Vagina (tissue), 2 donors: ENCODE measurements at regions of chr7 and their contacts with region 1.

Region 1: DNA sequence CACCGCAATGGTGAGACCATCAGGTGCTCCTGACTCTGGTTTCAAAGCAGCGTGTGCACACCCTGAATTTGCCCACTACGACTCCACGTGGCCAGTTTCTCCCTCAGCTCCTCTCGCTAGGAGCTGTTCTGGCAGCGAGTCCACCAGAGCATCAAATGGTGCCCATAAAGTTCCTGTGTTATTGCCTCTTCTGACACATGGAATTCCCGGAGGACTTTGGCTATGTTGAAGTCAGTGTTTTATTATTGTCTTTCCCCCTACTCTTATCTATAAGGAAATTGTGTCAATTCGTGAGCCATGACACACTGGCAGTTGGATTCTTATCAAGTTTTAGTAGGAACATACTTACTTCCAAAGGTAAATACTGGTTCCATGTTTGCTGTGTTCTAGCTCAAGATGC is 53.9 kb upstream of the NPVF start:
- DNase-seq: no peak
- H3K4me3 ChIP-seq: no peak overlapping the region
- H3K27ac ChIP-seq: no peak overlapping the region
- H3K4me1 ChIP-seq: no peaks in the 10 kb centered on the region
- H3K27me3 ChIP-seq: no peaks in the 10 kb centered on the region
- CTCF ChIP-seq: no peak
- POLR2A ChIP-seq: no peak

Region 2: DNA sequence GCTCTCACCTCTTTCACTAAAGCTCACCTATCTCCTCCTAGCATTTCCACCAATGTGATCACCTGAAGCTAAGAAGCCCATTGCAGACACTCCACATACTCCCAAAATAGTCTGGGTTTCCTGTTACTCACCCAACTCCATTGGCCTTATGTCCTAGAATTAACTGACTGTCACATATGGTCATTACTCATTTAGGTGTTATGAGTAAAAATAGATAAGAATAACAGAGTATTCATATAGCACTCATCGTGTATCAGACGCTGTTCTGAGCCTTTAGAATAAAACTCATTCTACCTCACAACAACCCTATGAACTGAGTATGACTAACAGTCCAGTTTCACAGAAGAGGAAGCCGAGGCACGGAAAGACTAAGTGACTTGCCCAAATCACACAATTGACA is 120.3 kb after region 1 on chr7:
- intact Hi-C with region 1: no loop called
- DNase-seq: peak in 1 of 2 donors; percentile 25
- H3K4me3 ChIP-seq: no peak overlapping the region
- H3K27ac ChIP-seq: no peak overlapping the region
- H3K4me1 ChIP-seq: peaks cover 5% of the 10 kb centered on the region
- H3K27me3 ChIP-seq: no peaks in the 10 kb centered on the region
- CTCF ChIP-seq: no peak
- POLR2A ChIP-seq: no peak

Region 3: DNA sequence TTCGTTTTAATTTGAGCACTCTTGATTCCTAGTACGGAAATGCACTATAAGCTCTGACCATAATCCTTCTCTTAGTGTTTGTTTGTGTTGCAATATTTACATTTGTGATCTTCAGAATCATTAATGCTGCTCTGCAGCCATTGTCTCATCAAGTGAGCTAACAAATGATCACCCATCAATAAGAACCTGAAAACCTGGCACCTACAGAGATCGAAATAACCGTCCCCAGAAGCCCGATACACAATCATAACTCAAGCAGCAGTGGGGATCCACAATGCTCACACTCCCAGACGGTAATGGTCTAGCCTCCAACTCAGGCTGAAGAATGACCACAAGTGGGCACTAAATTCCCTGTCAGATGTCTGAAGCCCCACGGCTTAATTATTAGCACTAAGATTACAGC is 713.8 kb after region 1 on chr7:
- intact Hi-C with region 1: no loop called
- DNase-seq: no peak
- H3K4me3 ChIP-seq: no peak overlapping the region
- H3K27ac ChIP-seq: no peak overlapping the region
- H3K4me1 ChIP-seq: no peaks in the 10 kb centered on the region
- H3K27me3 ChIP-seq: no peaks in the 10 kb centered on the region
- CTCF ChIP-seq: no peak
- POLR2A ChIP-seq: no peak

Region 4: GRCh38 chr7:26805045-26805444 is 1522.9 kb after region 1 on chr7:
- intact Hi-C with region 1: loop called (anchors 5 kb)
- DNase-seq: no peak
- H3K4me3 ChIP-seq: no peak overlapping the region
- H3K27ac ChIP-seq: no peak overlapping the region
- H3K4me1 ChIP-seq: no peaks in the 10 kb centered on the region
- H3K27me3 ChIP-seq: no peaks in the 10 kb centered on the region
- CTCF ChIP-seq: no peak
- POLR2A ChIP-seq: no peak